Dendritic cell treated with granulocyte-macrophage colony-stimulating factor and Interleukin-4, amounts not matched to agents 40 ng/mL and 50 ng/mL, for 4 days (primary cell): ENCODE measurements at regions of chr5 and their contacts with region 1.

Region 1: DNA sequence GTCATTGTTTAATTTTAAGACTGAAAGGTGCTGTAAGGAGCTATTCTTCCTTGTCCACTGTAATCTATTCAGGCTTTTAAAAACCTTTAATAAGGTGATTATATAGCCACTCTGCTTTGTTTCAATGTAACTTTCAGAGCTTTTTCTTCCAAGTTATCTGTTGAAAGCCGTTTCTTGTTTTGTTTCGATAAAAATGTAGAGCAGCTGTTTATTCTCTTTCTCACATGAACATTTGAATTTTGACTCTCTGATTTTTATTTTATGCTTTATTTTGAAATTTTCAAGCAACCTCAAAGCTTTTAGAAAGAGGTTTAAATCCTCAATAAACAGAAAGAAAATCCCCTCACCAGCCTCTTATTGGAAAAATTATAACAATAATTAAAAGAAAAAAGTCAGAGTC is 47.2 kb downstream of the CPEB4 start:
- H3K4me3 Mint-ChIP-seq: no peak overlapping the region
- H3K27ac Mint-ChIP-seq: no peak overlapping the region
- H3K4me1 Mint-ChIP-seq: peaks cover 24% of the 10 kb centered on the region
- H3K27me3 Mint-ChIP-seq: no peaks in the 10 kb centered on the region

Region 2: DNA sequence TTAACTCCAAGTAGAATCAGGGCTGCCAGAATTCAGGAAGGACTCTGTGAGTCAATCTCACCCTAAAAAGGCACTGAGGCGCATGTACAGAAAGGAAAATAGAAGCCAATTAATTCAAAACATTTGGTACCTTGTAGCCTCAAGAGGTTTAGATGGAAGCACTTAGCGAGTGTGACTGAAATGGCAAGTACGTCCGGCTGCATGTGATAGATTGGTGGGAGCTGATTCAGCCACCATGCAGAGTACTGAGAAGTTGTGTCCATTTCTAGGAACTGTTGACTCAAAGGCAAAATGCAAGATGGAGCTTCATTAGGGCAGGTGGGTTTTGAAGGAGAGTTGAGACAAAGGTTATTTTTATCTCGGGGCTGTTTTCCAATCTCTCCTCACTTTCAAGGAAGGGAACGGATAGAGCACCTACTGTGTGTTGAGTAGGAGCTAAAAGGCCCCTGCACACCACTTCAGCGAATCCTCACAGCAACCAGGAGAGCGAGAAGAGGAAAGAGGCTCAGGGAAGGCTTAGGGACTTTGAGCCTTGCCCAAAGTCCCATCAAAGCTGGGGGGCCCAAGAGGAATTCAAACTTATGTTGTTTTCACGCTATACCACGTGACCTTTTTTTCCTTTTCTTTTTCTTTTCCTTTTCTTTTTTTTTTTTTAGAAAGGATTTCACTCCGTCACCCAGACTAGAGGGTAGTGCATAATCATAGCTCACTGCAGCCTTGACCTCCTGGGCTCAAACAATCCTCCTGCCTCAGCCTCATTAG is 81.8 kb before region 1 on chr5:
- intact Hi-C with region 1: no loop called
- H3K4me3 Mint-ChIP-seq: no peak overlapping the region
- H3K27ac Mint-ChIP-seq: peak overlapping the region; percentile 77
- H3K4me1 Mint-ChIP-seq: peaks cover 62% of the 10 kb centered on the region
- H3K27me3 Mint-ChIP-seq: peaks cover 11% of the 10 kb centered on the region

Region 3: GRCh38 chr5:173903396-173904140 is 31.8 kb before region 1 on chr5:
- intact Hi-C with region 1: loop called (anchors 5 kb)
- H3K4me3 Mint-ChIP-seq: no peak overlapping the region
- H3K27ac Mint-ChIP-seq: no peak overlapping the region
- H3K4me1 Mint-ChIP-seq: peaks cover 52% of the 10 kb centered on the region
- H3K27me3 Mint-ChIP-seq: no peaks in the 10 kb centered on the region

Region 4: DNA sequence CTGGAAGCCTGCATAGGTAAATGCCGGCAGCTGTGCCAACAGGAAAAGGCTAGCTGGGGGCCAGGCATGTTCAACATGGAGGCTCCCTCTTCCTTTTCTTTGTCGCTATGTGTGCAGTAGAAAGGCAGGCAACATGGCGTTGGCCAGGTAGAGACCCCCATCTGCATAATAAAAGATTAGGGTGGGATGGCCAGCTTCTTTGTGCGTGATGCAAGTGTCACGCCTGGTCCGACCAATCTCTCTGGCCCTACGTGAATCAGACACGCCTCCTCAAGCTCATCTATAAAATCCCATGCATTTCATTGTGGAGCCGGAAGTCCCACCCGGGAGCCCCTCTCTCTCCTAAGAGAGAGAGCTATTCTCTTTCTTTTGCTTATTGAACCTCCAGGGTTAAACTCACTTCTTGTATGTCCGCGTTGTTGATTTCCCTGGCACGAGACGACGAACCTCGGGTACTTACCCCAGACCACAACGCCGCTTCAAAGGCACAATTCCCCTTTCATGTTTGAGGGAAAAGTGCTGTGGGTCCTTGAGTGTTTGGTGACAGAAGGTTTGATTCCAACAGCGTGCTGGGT is 28.6 kb after region 1 on chr5:
- intact Hi-C with region 1: no loop called
- H3K4me3 Mint-ChIP-seq: no peak overlapping the region
- H3K27ac Mint-ChIP-seq: no peak overlapping the region
- H3K4me1 Mint-ChIP-seq: peaks cover 24% of the 10 kb centered on the region
- H3K27me3 Mint-ChIP-seq: no peaks in the 10 kb centered on the region

Region 5: GRCh38 chr5:174418928-174419796 is 483.8 kb after region 1 on chr5:
- intact Hi-C with region 1: no loop called
- H3K4me3 Mint-ChIP-seq: no peak overlapping the region
- H3K27ac Mint-ChIP-seq: no peak overlapping the region
- H3K4me1 Mint-ChIP-seq: peaks cover 8% of the 10 kb centered on the region
- H3K27me3 Mint-ChIP-seq: peaks cover 18% of the 10 kb centered on the region